ENCODE measurements at regions of chr12 and their contacts with region 1.

Region 1: GRCh38 chr12:122225683-122226407 is at the start of gene DIABLO:
- DNase-seq: peak; percentile 100
- ATAC-seq: peak; percentile 98
- H3K4me3 Mint-ChIP-seq: peak within 1 kb of the TSS; percentile 92
- H3K27ac Mint-ChIP-seq: peak within 1 kb of the TSS; percentile 93
- H3K4me1 Mint-ChIP-seq: peaks cover 29% of the 10 kb centered on the region
- H3K27me3 Mint-ChIP-seq: no peaks in the 10 kb centered on the region
- total RNA-seq, gene DIABLO: 46.3 to 47.0 TPM

Region 2: DNA sequence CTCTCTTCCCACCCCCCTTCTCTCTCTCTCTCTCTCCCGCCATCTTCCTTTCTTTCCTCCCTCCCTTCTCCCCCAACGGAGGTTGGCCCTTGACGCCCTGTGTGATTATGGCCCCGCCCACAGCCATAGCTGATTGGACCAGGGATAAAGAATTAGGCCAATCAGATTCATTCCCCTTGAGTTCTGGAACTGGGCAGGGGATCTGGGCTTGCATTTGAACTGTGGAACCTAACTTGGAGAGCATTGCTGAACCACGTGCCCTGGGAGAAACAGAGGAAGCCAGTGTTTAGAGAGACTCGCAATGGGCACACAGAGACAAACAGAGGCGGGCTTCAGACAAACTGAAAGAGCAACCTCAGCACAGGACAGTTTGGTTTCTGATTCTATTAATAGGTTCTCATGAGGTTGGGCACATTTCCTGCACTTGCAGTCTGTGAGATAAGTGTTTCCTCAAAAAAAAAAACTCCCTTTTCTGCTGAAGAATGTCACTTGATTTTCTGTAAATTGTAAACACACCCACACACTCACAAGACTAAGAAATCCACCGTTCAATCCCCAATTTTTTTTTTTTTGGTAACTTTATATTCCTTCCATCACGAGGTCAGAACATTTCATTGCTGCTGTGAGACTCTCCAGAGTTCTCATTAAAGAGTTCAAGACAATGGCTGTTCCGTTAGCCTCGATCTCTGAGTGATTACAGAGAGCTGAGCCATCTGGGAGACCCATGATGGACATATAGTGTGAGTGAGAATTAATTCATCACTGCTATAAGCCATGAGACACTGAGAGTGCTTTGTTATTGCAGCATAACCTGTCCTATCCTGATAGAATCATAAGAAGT is 1096.7 kb before region 1 on chr12:
- CTCF ChIA-PET with region 1: no interaction called
- POLR2A ChIA-PET with region 1: no interaction called
- intact Hi-C with region 1: loop called in 1 of 2 experiments (anchors 5 kb)
- DNase-seq: peak; percentile 90
- ATAC-seq: peak; percentile 83
- H3K4me3 Mint-ChIP-seq: peak overlapping the region; percentile 63
- H3K27ac Mint-ChIP-seq: peak overlapping the region; percentile 98
- H3K4me1 Mint-ChIP-seq: peaks cover 68% of the 10 kb centered on the region
- H3K27me3 Mint-ChIP-seq: no peaks in the 10 kb centered on the region

Region 3: GRCh38 chr12:121839106-121839992 is 386.5 kb before region 1 on chr12:
- CTCF ChIA-PET with region 1: interaction called, 3 read pairs
- POLR2A ChIA-PET with region 1: no interaction called
- intact Hi-C with region 1: loop called in 1 of 2 experiments (anchors 1 kb)
- DNase-seq: peak; percentile 100
- ATAC-seq: peak; percentile 94
- H3K4me3 Mint-ChIP-seq: peak overlapping the region; percentile 91
- H3K27ac Mint-ChIP-seq: peak overlapping the region; percentile 91
- H3K4me1 Mint-ChIP-seq: peaks cover 14% of the 10 kb centered on the region
- H3K27me3 Mint-ChIP-seq: no peaks in the 10 kb centered on the region

Region 4: GRCh38 chr12:122203301-122204166 is 22.3 kb before region 1 on chr12 and contains the start of gene B3GNT4:
- CTCF ChIA-PET with region 1: interaction called, 3 read pairs
- POLR2A ChIA-PET with region 1: interaction called, 3 read pairs
- intact Hi-C with region 1: loop called in 1 of 2 experiments (anchors 1 kb)
- DNase-seq: peak; percentile 85
- ATAC-seq: peak; percentile 81
- H3K4me3 Mint-ChIP-seq: peak within 1 kb of the TSS; percentile 74
- H3K27ac Mint-ChIP-seq: no peak within 1 kb of the TSS
- H3K4me1 Mint-ChIP-seq: peaks cover 12% of the 10 kb centered on the region
- H3K27me3 Mint-ChIP-seq: peaks cover 17% of the 10 kb centered on the region
- total RNA-seq, gene B3GNT4: 2.0 to 2.6 TPM

Region 5: DNA sequence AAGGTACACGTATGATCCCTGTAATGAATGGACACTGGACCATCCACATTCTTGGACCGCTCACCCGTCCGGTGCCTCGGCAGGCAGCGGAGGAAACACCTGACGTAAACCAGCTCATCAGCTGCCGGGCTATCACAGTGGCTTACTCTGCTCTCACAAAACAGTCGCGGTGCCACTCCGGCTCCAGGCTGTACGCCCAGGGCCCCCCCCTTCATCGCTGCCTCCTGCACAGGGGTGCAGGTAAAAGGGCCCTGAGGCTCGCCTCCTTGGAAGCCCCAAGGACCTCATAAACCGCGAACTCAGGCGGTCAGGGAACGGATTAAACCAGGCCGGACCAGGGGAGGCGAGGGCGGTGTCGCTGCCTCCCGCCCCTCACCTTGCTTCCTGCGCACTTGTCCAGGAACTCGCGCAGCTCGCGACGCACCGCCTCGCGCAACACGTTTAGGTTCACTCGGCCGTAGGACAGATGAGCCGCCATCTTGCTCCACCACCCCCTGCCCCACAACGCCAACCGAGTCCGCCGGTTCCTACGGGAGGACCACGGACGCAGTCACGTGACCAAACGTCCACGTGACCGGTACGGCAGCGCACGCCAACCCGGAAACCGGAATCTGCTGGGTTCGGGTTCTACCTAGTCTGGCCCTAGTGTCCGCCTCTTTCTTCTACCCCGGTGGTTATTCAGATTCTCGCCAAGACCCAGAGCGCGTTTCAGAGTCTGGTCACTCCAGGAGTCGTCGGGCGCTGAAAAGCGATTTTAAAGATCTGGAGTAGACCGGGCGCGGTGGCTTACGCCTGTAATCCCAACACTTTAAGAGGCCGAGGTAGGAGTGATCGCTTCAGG is 40.3 kb after region 1 on chr12 and contains the start of gene VPS33A:
- CTCF ChIA-PET with region 1: interaction called, 4 read pairs
- POLR2A ChIA-PET with region 1: no interaction called
- intact Hi-C with region 1: loop called (anchors 1 kb)
- DNase-seq: peak; percentile 98
- ATAC-seq: peak; percentile 86
- H3K4me3 Mint-ChIP-seq: peak within 1 kb of the TSS; percentile 97
- H3K27ac Mint-ChIP-seq: peak within 1 kb of the TSS; percentile 98
- H3K4me1 Mint-ChIP-seq: peaks cover 23% of the 10 kb centered on the region
- H3K27me3 Mint-ChIP-seq: no peaks in the 10 kb centered on the region
- total RNA-seq, gene VPS33A: 24.8 to 26.4 TPM

Region 6: DNA sequence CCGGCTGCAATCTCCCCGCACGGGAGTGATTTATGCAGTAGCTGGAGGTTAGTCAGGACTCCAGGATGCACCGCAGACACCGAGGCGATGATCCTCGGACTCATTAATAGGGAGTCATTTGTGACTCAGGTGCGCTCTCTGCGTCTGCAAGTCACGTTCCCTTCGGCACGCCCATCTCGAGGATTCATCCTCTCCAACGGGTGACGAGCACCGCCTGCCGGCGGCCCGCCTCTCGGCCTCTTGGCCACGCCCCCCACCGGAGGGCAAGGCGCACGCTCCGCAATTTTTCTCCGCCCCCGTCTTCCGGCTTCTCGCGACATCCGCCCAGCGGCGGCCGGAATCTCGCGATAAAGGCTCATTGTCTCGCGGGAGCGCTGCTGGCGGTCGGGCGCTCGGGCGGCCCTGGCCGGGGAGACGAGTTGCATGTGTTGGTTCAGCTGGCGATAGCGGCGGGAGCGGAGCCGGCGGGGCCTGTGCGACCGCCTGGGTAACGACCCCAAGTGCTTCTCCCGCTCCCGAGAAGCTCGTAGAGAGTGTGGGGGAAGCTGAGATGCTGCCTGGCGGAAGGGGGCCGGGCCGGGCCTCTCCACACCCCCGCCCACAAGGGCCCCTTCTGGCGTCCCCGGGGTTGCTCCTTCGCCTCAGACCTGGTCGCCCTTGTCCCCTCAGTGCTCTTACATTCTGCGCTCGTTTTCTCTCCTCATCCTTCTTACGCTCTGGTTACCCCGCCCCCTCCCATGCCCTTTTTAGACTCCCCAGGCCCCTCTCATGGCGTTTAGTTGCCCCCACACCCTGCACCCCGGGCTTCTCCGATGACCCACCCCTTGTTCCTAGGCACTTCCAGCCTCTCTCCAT is 526.8 kb after region 1 on chr12 and contains the start of gene DENR:
- CTCF ChIA-PET with region 1: no interaction called
- POLR2A ChIA-PET with region 1: no interaction called
- intact Hi-C with region 1: loop called in 1 of 2 experiments (anchors 1 kb)
- DNase-seq: peak; percentile 100
- ATAC-seq: peak; percentile 95
- H3K4me3 Mint-ChIP-seq: peak within 1 kb of the TSS; percentile 92
- H3K27ac Mint-ChIP-seq: peak within 1 kb of the TSS; percentile 96
- H3K4me1 Mint-ChIP-seq: peaks cover 53% of the 10 kb centered on the region
- H3K27me3 Mint-ChIP-seq: no peaks in the 10 kb centered on the region
- total RNA-seq, gene DENR: 64.1 to 76.9 TPM

Region 7: DNA sequence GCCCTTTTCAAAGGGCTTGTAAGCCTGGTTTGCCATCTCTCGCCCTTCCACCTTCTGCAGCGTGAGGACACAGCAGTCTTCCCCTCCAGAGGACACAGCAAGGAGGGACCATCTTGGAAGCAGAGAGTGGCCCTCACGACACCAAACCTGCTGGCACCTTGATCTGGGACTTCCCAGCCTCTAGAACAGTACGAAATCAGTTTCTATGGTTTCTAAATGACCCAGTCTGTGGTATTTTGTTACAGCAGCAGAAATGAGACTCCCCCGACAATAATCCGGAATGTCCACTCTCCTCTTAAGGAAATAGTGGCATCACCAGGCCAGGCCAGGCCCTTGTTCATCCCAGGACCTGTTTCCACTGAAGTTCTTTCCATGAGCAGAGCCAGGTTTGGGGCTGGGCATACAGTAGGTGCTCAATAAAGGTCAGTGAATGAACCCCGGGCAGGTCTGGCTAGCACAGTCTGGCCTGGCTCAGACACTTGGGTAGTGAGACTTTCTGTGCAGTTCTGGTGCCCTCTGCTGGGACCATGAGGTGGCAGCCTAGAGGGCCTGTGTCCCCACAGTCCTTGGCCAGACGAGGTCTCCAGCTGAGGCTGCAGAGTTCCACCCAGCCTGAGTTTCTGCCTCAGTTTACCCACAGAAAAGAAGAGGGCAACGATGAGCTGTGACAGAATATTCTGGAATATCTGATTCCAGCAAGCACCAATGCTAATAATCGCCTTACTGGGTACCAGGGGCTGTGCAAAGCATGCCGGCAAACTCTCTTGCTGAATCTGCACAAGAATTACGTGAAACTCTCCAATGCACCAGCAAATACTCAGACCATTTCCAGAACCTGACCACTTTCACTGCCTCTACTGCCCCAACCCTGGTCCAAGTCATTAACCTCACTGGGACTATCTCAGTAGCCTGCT is 726.4 kb after region 1 on chr12:
- CTCF ChIA-PET with region 1: no interaction called
- POLR2A ChIA-PET with region 1: no interaction called
- intact Hi-C with region 1: no loop called
- DNase-seq: peak; percentile 85
- ATAC-seq: peak; percentile 97
- H3K4me3 Mint-ChIP-seq: no peak overlapping the region
- H3K27ac Mint-ChIP-seq: no peak overlapping the region
- H3K4me1 Mint-ChIP-seq: peaks cover 4% of the 10 kb centered on the region
- H3K27me3 Mint-ChIP-seq: no peaks in the 10 kb centered on the region

Region 8: DNA sequence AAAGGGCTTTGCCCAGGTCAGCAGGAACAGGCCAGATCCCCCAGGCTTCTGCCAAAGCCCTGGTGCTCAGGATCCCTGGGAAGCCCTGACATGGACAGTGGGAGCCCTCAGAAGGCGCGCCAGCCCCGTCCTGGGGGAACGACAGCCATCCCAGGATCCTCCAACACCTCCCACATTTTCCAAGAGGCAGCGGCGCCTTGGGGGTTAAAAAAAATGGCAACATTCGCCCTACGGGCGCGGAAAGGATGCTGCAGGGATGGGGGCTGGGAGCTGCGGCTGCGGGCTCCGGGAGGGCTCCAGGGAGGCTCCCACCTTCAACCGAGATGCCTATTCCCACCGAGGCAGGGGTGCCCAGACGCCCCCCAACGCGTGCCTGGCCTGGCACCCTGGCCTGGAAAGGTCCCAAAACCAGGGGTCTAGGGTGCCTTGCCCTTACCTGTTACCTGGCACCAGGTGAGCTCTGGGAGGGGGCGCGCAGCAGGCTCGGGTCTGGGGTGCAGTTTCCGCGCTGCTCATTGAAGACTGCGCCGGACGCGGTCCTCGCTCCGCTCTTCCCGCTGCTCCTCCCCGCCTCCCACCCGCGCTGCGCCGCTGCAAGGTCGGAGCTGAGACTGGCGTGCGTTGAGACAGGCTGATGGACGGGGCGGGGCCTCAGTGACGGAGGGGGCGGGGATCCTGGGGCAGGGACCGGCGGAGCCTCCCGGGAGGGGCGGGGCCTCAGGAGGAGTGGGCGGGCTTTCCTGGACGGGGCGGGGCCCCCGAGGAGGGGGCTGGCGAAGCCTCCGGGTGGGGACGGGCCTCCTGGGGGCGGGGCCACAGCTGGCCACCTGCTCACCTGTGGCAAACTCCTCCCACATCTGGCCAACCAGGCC is 740.2 kb after region 1 on chr12 and contains the start of gene ABCB9:
- CTCF ChIA-PET with region 1: no interaction called
- POLR2A ChIA-PET with region 1: no interaction called
- intact Hi-C with region 1: loop called in 1 of 2 experiments (anchors 1 kb)
- DNase-seq: peak; percentile 99
- ATAC-seq: peak; percentile 99
- H3K4me3 Mint-ChIP-seq: peak within 1 kb of the TSS; percentile 63
- H3K27ac Mint-ChIP-seq: peak within 1 kb of the TSS; percentile 42
- H3K4me1 Mint-ChIP-seq: peaks cover 2% of the 10 kb centered on the region
- H3K27me3 Mint-ChIP-seq: no peaks in the 10 kb centered on the region
- total RNA-seq, gene ABCB9: 3.8 to 6.3 TPM